SK-N-SH (cell line): ENCODE measurements at regions of chr1 and their contacts with region 1.

Region 1: GRCh38 chr1:44652445-44653106 is 21.7 kb downstream of the TMEM53 start:
- DNase-seq: peak; percentile 88
- H3K4me3 ChIP-seq: peak overlapping the region in 1 of 2 experiments; percentile 35; a peak in 1 of 4 replicates
- H3K27ac ChIP-seq: no peak overlapping the region
- H3K4me1 ChIP-seq: peaks cover 0 to 31% of the 10 kb centered on the region in 2 experiments; a peak in 1 of 4 replicates
- H3K27me3 ChIP-seq: no peaks in the 10 kb centered on the region
- CTCF ChIP-seq: peak; percentile 93
- EP300 ChIP-seq: no peak
- RAD21 ChIP-seq: peak; percentile 98

Region 2: GRCh38 chr1:44571712-44572571 is 80.6 kb before region 1 on chr1:
- CTCF ChIA-PET with region 1: interaction called, 83 read pairs
- POLR2A ChIA-PET with region 1: no interaction called
- DNase-seq: peak; percentile 45
- H3K4me3 ChIP-seq: peak overlapping the region in 1 of 2 experiments; percentile 23; a peak in 1 of 4 replicates
- H3K27ac ChIP-seq: no peak overlapping the region
- H3K4me1 ChIP-seq: no peaks in the 10 kb centered on the region
- H3K27me3 ChIP-seq: peaks cover 20% of the 10 kb centered on the region; the same call in 1 of the 2 replicates
- CTCF ChIP-seq: peak; percentile 53
- EP300 ChIP-seq: no peak
- RAD21 ChIP-seq: peak; percentile 51

Region 3: DNA sequence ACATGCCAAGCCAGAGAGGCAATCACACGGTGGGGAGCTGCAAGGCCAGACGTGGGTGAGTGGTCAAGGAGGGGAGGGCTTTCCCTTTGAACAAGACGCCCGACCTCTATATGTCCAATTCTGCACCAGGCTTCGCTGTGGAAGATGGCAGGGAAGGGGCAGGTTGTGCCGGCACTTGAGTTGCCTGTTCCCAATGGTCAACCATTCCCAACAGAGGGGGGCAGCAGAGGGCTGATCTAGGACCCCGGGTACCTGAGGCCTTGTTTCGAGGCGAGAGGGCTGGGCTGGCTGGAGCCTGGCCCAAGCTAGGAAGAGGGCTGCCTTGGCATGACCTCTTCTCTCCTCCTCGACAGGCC is 43.2 kb before region 1 on chr1:
- CTCF ChIA-PET with region 1: interaction called, 150 read pairs
- POLR2A ChIA-PET with region 1: interaction called, 3 read pairs
- DNase-seq: peak; percentile 76
- H3K4me3 ChIP-seq: no peak overlapping the region
- H3K27ac ChIP-seq: no peak overlapping the region
- H3K4me1 ChIP-seq: peaks cover 0 to 3% of the 10 kb centered on the region in 2 experiments; a peak in 2 of 4 replicates
- H3K27me3 ChIP-seq: no peaks in the 10 kb centered on the region
- CTCF ChIP-seq: peak; percentile 59
- EP300 ChIP-seq: no peak
- RAD21 ChIP-seq: peak; percentile 78

Region 4: DNA sequence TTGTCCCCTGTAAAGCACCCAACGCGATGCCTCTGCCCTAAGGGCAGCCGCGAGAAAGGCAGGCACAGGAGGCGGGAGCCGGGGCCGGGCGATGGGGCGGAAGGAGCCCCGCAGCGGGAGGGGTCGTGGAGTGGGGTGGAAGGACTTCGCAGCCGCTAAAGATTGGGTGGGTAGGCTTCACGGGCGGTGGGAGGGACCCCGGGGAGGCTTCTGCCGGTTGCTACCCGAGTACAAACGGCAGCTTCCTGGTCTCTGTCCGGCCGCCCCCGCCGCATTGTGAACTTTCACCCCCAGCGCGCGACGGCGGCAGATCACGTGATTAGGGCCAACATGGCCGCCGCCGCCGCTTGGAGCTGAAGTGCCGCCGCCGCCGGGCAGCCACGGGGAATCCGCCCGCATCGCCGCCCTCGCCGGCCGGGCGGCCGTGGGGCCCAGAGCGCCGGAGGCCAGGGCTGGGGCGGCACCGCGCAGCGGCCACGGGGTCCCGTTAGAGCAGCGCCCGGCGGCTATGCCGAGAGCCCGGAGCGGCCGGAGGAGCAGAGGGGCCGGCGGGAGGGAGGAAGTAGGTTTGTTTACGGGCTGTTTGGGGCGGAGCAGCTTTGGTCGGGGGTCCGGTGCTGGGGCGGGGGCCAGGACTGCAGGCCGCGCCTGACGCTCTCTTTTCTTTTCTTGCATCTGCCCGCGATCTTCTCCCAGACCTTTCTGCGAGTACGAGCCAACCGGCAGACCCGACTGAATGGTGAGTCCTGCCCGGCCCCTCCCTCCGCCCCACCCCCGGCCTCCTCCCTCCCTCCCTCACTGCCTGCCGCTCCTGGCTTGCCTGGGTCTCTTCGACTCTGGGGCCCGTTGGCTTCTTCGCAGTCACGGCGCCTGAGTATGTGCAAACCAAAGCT is 20.7 kb before region 1 on chr1:
- CTCF ChIA-PET with region 1: interaction called, 163 read pairs
- POLR2A ChIA-PET with region 1: interaction called, 50 read pairs
- DNase-seq: peak; percentile 97
- H3K4me3 ChIP-seq: peak overlapping the region; percentile 74 to 77
- H3K27ac ChIP-seq: peak overlapping the region; percentile 83 to 89
- H3K4me1 ChIP-seq: peaks cover 4 to 44% of the 10 kb centered on the region in 2 experiments; a peak in 1 of 4 replicates
- H3K27me3 ChIP-seq: no peaks in the 10 kb centered on the region
- CTCF ChIP-seq: no peak
- EP300 ChIP-seq: no peak; a peak in 1 of 4 replicates
- RAD21 ChIP-seq: no peak